PC-3 (cell line): ENCODE measurements at regions of chr2 and their contacts with region 1.

Region 1: GRCh38 chr2:113370478-113371091 is 66.9 kb upstream of the ZNG1B start:
- DNase-seq: peak; percentile 92
- ATAC-seq: peak; percentile 99
- H3K4me3 ChIP-seq: no peak overlapping the region
- H3K27ac ChIP-seq: no peak overlapping the region
- H3K4me1 ChIP-seq: peaks cover 20% of the 10 kb centered on the region
- H3K27me3 ChIP-seq: no peaks in the 10 kb centered on the region
- CTCF ChIP-seq: peak; percentile 75

Region 2: GRCh38 chr2:113203901-113204519 is 166.6 kb before region 1 on chr2:
- CTCF ChIA-PET with region 1: interaction called, 5 read pairs
- POLR2A ChIA-PET with region 1: no interaction called
- intact Hi-C with region 1: loop called (anchors 1 kb)
- DNase-seq: peak; percentile 89
- ATAC-seq: peak; percentile 67
- H3K4me3 ChIP-seq: no peak overlapping the region
- H3K27ac ChIP-seq: 0 out of 2 replicates have a peak overlapping the region, but pooled peaks have one; percentile 5
- H3K4me1 ChIP-seq: peaks cover 18% of the 10 kb centered on the region
- H3K27me3 ChIP-seq: no peaks in the 10 kb centered on the region
- CTCF ChIP-seq: peak; percentile 92

Region 3: DNA sequence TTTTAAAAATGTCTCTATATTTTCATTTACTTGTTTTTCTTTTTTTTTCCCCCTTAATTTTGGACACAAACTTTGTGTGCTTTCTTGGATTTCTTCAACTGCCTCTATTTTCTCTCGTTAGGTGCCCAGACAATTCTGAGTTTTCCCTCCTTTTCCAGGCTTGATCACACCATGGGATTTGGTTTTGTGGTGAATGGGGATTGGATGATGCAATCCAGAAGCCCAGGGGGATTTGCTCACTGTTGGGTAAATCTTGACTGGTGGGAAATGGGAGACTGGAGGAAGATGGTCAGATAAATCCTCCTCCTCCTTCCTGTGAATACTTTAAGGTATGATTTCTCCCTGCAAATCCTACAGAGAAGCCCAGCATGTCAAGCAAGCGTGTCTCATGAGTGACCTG is 72.4 kb before region 1 on chr2:
- CTCF ChIA-PET with region 1: no interaction called
- POLR2A ChIA-PET with region 1: no interaction called
- intact Hi-C with region 1: loop called (anchors 1 kb)
- DNase-seq: no peak
- ATAC-seq: no peak
- H3K4me3 ChIP-seq: no peak overlapping the region
- H3K27ac ChIP-seq: no peak overlapping the region
- H3K4me1 ChIP-seq: 0 out of 2 replicates have a peak, but pooled peaks cover 4% of the 10 kb centered on the region
- H3K27me3 ChIP-seq: no peaks in the 10 kb centered on the region
- CTCF ChIP-seq: no peak

Region 4: GRCh38 chr2:113328043-113328442 is 42.5 kb before region 1 on chr2:
- CTCF ChIA-PET with region 1: no interaction called
- POLR2A ChIA-PET with region 1: no interaction called
- intact Hi-C with region 1: loop called (anchors 1 kb)
- DNase-seq: peak; percentile 11
- ATAC-seq: no peak
- H3K4me3 ChIP-seq: peak overlapping the region; percentile 53; the same call in 1 of the 2 replicates
- H3K27ac ChIP-seq: peak overlapping the region; percentile 98
- H3K4me1 ChIP-seq: peaks cover 63% of the 10 kb centered on the region
- H3K27me3 ChIP-seq: no peaks in the 10 kb centered on the region
- CTCF ChIP-seq: no peak